ENCODE measurements at regions of chrX and their contacts with region 1.

Region 1: GRCh38 chrX:135596495-135596894 is 76.0 kb downstream of the INTS6L start:
- DNase-seq: peak in 8 of 9 donors; percentile 8 to 44 (median 14)
- ATAC-seq: peak; percentile 68
- H3K4me3 ChIP-seq: no peak overlapping the region
- H3K4me3 Mint-ChIP-seq: no peak overlapping the region
- H3K27ac ChIP-seq: no peak overlapping the region
- H3K27ac Mint-ChIP-seq: no peak overlapping the region
- H3K4me1 ChIP-seq: no peaks in the 10 kb centered on the region
- H3K4me1 Mint-ChIP-seq: peaks cover 0 to 3% (median 0%) of the 10 kb centered on the region in 7 donors
- H3K27me3 ChIP-seq: no peaks in the 10 kb centered on the region
- H3K27me3 Mint-ChIP-seq: peaks cover 0 to 19% (median 5%) of the 10 kb centered on the region in 5 donors

Region 2: GRCh38 chrX:133745349-133745748 is 1851.1 kb before region 1 on chrX:
- CTCF ChIA-PET with region 1: no interaction called
- POLR2A ChIA-PET with region 1: no interaction called
- intact Hi-C with region 1: no loop called
- DNase-seq: peak in 7 of 9 donors; percentile 30 to 77 (median 59)
- ATAC-seq: peak; percentile 87
- H3K4me3 ChIP-seq: no peak overlapping the region
- H3K4me3 Mint-ChIP-seq: peak overlapping the region in 7 of 10 donors; percentile 7 to 57 (median 36)
- H3K27ac ChIP-seq: peak overlapping the region; percentile 14
- H3K27ac Mint-ChIP-seq: peak overlapping the region in 8 of 9 donors; percentile 71 to 94 (median 80)
- H3K4me1 ChIP-seq: peaks cover 0 to 49% of the 10 kb centered on the region in 2 donors
- H3K4me1 Mint-ChIP-seq: peaks cover 11 to 75% (median 65%) of the 10 kb centered on the region in 7 donors
- H3K27me3 ChIP-seq: no peaks in the 10 kb centered on the region
- H3K27me3 Mint-ChIP-seq: no peaks in the 10 kb centered on the region

Region 3: DNA sequence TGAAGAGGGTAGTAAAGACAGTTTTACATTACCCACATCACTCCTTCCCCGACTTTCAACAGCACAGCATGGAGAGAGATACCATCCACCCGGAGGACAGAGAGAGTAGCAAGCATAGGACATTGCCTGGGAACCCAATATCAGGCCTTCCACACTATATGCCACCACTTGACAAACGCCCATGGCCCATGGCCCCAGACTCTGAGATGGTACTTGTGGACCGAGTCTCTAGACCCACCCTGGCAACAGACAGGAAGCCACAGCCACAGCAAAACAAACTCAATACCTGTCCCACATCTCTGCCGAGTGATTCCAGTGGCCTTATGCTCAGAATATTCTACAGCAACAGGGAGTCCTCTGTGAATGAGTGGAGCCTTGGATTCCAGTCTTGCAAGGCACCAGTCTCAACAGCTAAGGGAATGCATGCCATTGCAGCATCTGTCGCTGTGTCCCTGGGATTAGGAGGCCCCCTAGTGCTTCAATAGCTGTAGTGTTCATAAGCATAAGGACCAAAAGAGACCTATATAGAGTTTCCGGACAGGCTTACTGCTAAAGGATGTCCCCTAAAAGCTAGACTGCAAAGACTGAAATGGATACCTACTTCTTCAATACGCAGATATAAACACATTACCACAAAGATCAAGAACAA is 410.6 kb before region 1 on chrX:
- CTCF ChIA-PET with region 1: no interaction called
- POLR2A ChIA-PET with region 1: no interaction called
- intact Hi-C with region 1: loop called in 1 of 2 experiments (anchors 5 kb)
- DNase-seq: peak in 7 of 9 donors; percentile 2 to 44 (median 15)
- ATAC-seq: peak; percentile 81
- H3K4me3 ChIP-seq: no peak overlapping the region
- H3K4me3 Mint-ChIP-seq: no peak overlapping the region
- H3K27ac ChIP-seq: no peak overlapping the region
- H3K27ac Mint-ChIP-seq: no peak overlapping the region
- H3K4me1 ChIP-seq: no peaks in the 10 kb centered on the region
- H3K4me1 Mint-ChIP-seq: peaks cover 0 to 10% (median 0%) of the 10 kb centered on the region in 7 donors
- H3K27me3 ChIP-seq: no peaks in the 10 kb centered on the region
- H3K27me3 Mint-ChIP-seq: peaks cover 15 to 63% (median 23%) of the 10 kb centered on the region in 5 donors

Region 4: GRCh38 chrX:135543924-135544323 is 52.6 kb before region 1 on chrX:
- CTCF ChIA-PET with region 1: no interaction called
- POLR2A ChIA-PET with region 1: no interaction called
- intact Hi-C with region 1: no loop called
- DNase-seq: peak in 7 of 9 donors; percentile 7 to 42 (median 30)
- ATAC-seq: peak; percentile 65
- H3K4me3 ChIP-seq: no peak overlapping the region
- H3K4me3 Mint-ChIP-seq: peak overlapping the region in 4 of 10 donors; percentile 12 to 59 (median 38)
- H3K27ac ChIP-seq: no peak overlapping the region
- H3K27ac Mint-ChIP-seq: peak overlapping the region in 4 of 9 donors; percentile 34 to 91 (median 82)
- H3K4me1 ChIP-seq: peaks cover 7 to 12% of the 10 kb centered on the region in 2 donors
- H3K4me1 Mint-ChIP-seq: peaks cover 21 to 58% (median 47%) of the 10 kb centered on the region in 7 donors
- H3K27me3 ChIP-seq: no peaks in the 10 kb centered on the region
- H3K27me3 Mint-ChIP-seq: no peaks in the 10 kb centered on the region

Region 5: DNA sequence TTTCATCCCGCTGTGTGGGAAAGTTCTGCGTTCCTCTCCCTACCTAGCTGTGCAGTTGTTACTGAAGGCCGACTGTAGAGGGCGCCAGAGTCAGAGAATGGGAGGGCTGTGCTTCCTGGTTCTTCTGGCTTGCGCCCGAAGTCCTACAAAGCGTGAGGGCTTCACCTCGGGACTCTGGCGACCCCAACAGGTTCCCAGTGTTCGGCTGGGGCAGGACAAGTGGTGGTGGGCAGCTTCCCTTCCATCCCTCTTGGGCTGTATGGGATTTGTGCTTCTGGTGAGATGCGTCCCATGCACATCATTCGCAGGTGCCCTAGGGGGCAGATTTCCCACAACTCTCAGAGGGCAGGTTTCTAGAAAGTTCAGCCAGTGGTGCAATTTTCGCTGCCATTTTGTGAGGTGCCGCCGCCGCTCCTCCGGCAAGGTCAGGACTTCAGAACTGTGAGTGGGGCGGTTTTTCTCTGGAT is 144.2 kb after region 1 on chrX:
- CTCF ChIA-PET with region 1: no interaction called
- POLR2A ChIA-PET with region 1: no interaction called
- intact Hi-C with region 1: no loop called
- DNase-seq: peak in 7 of 9 donors; percentile 10 to 33 (median 24)
- ATAC-seq: peak; percentile 54
- H3K4me3 ChIP-seq: no peak overlapping the region
- H3K4me3 Mint-ChIP-seq: peak overlapping the region in 7 of 10 donors; percentile 10 to 62 (median 36)
- H3K27ac ChIP-seq: no peak overlapping the region
- H3K27ac Mint-ChIP-seq: peak overlapping the region in 1 of 9 donors; percentile 55
- H3K4me1 ChIP-seq: no peaks in the 10 kb centered on the region
- H3K4me1 Mint-ChIP-seq: peaks cover 0 to 4% (median 0%) of the 10 kb centered on the region in 7 donors
- H3K27me3 ChIP-seq: no peaks in the 10 kb centered on the region
- H3K27me3 Mint-ChIP-seq: peaks cover 0 to 4% (median 0%) of the 10 kb centered on the region in 5 donors

Region 6: GRCh38 chrX:136227948-136228838 is 631.7 kb after region 1 on chrX:
- CTCF ChIA-PET with region 1: no interaction called
- POLR2A ChIA-PET with region 1: no interaction called
- intact Hi-C with region 1: no loop called
- DNase-seq: no peak
- ATAC-seq: no peak
- H3K4me3 ChIP-seq: no peak overlapping the region
- H3K4me3 Mint-ChIP-seq: peak overlapping the region in 1 of 10 donors; percentile 67
- H3K27ac ChIP-seq: no peak overlapping the region
- H3K27ac Mint-ChIP-seq: peak overlapping the region in 2 of 9 donors; percentile 57 to 76
- H3K4me1 ChIP-seq: no peaks in the 10 kb centered on the region
- H3K4me1 Mint-ChIP-seq: peaks cover 0 to 25% (median 4%) of the 10 kb centered on the region in 7 donors
- H3K27me3 ChIP-seq: no peaks in the 10 kb centered on the region
- H3K27me3 Mint-ChIP-seq: no peaks in the 10 kb centered on the region

Measured in naive thymus-derived CD4-positive, alpha-beta T cell (primary cell).